Naive thymus-derived CD4-positive, alpha-beta T cell (primary cell): ENCODE measurements at regions of chr13 and their contacts with region 1.

Region 1: GRCh38 chr13:48412881-48413351 is at the start of gene LPAR6:
- DNase-seq: peak in 7 of 9 donors; percentile 30 to 55 (median 47)
- ATAC-seq: peak; percentile 67
- H3K4me3 ChIP-seq: peak within 1 kb of the TSS; percentile 73
- H3K4me3 Mint-ChIP-seq: peak within 1 kb of the TSS; percentile 86 to 100 (median 98)
- H3K27ac ChIP-seq: peak within 1 kb of the TSS; percentile 90
- H3K27ac Mint-ChIP-seq: peak within 1 kb of the TSS; percentile 92 to 100 (median 94)
- H3K4me1 ChIP-seq: peaks cover 9 to 19% of the 10 kb centered on the region in 2 donors
- H3K4me1 Mint-ChIP-seq: peaks cover 19 to 47% (median 40%) of the 10 kb centered on the region in 7 donors
- H3K27me3 ChIP-seq: no peaks in the 10 kb centered on the region
- H3K27me3 Mint-ChIP-seq: no peaks in the 10 kb centered on the region
- total RNA-seq, gene LPAR6: 24.1 to 60.4 (median 32.8) TPM

Region 2: DNA sequence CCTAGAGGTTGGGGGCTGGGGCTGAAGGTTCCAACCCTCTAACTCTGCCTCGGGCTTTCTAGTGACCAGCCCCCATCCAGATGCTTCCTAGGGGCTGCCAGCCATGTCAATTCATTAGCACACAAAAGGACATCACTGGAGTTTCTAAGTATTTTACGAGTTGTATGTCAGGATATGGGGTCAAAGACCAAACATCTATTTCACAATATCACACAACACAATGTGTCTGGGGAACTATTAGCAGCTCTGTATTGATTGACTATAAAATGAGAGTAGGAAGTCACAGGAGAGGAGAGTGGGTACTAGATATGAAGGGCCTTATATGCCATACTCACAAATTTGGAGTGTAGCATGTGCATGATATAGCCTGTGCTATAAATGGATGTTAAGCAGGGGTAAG is 42.1 kb before region 1 on chr13:
- CTCF ChIA-PET with region 1: no interaction called
- POLR2A ChIA-PET with region 1: no interaction called
- intact Hi-C with region 1: no loop called
- DNase-seq: no peak
- ATAC-seq: no peak
- H3K4me3 ChIP-seq: no peak overlapping the region
- H3K4me3 Mint-ChIP-seq: no peak overlapping the region
- H3K27ac ChIP-seq: no peak overlapping the region
- H3K27ac Mint-ChIP-seq: no peak overlapping the region
- H3K4me1 ChIP-seq: no peaks in the 10 kb centered on the region
- H3K4me1 Mint-ChIP-seq: peaks cover 0 to 5% (median 0%) of the 10 kb centered on the region in 7 donors
- H3K27me3 ChIP-seq: no peaks in the 10 kb centered on the region
- H3K27me3 Mint-ChIP-seq: no peaks in the 10 kb centered on the region

Region 3: DNA sequence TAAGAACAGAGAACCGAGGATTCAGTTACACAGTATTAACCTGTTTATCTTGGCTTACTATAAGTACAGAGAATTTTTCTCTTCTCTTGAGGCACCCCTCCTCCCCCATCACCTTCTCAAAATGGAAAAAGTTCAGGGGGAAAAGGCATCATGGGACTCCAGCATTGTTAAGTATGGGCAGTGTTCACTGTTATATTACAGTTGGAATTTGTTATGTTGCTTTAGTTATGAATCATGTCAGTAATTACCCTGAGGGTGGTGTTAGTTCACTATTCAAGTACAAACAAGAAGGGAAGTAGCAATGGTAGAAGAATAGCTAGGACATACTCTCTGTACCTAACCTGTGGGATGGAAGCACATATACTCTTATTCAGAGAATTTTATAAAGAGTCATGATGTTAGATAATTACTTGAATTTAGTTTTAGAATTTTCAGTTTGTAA is 12.0 kb before region 1 on chr13:
- CTCF ChIA-PET with region 1: interaction called, 4 read pairs
- POLR2A ChIA-PET with region 1: interaction called, 7 read pairs
- intact Hi-C with region 1: loop called (anchors 1 kb)
- DNase-seq: peak in 2 of 9 donors; percentile 36 to 42
- ATAC-seq: peak; percentile 74
- H3K4me3 ChIP-seq: no peak overlapping the region
- H3K4me3 Mint-ChIP-seq: peak overlapping the region; percentile 1 to 83 (median 54)
- H3K27ac ChIP-seq: peak overlapping the region; percentile 49
- H3K27ac Mint-ChIP-seq: peak overlapping the region; percentile 1 to 90 (median 50)
- H3K4me1 ChIP-seq: peaks cover 33 to 40% of the 10 kb centered on the region in 2 donors
- H3K4me1 Mint-ChIP-seq: peaks cover 23 to 78% (median 63%) of the 10 kb centered on the region in 7 donors
- H3K27me3 ChIP-seq: no peaks in the 10 kb centered on the region
- H3K27me3 Mint-ChIP-seq: no peaks in the 10 kb centered on the region

Region 4: DNA sequence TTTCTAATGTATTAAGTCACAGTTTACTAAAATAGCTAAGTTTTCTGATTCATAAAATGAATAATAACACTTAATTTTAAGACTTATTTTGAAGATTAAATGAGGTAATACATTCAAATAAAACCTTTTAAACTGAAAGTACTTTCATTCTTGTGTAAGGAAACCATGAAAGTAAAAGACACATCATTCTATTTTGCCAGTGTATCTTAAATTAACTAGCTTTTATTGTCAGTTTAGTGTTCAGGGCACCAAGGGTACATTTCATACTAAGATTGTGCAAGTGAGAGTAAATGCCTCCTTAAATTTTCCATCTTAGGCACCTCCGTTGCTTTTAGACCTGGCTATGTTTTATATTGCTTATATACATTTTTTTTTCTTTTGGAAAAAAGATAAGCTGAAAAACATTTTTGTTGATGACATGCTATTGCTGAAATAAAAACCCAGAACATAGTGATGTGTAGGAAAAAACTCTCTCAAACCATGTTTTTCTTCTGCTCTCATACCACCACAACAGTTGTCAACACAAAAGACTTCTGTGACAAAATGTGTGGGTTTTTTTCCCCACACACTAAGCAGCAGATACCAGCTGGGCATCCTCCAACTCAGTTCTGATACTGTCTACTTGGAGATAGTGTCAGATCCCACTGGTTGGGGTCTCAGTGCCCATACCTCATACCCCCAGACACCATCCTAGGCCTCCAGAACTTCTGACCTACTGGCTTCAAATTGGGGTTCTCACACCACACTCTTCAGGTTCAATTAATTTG is 30.7 kb after region 1 on chr13:
- CTCF ChIA-PET with region 1: no interaction called
- POLR2A ChIA-PET with region 1: interaction called, 3 read pairs
- intact Hi-C with region 1: loop called (anchors 2 to 5 kb)
- DNase-seq: peak in 3 of 9 donors; percentile 8 to 16 (median 9)
- ATAC-seq: no peak
- H3K4me3 ChIP-seq: no peak overlapping the region
- H3K4me3 Mint-ChIP-seq: peak overlapping the region; percentile 22 to 78 (median 65)
- H3K27ac ChIP-seq: no peak overlapping the region
- H3K27ac Mint-ChIP-seq: peak overlapping the region in 6 of 9 donors; percentile 32 to 92 (median 76)
- H3K4me1 ChIP-seq: peaks cover 0 to 11% of the 10 kb centered on the region in 2 donors
- H3K4me1 Mint-ChIP-seq: peaks cover 12 to 25% (median 22%) of the 10 kb centered on the region in 7 donors
- H3K27me3 ChIP-seq: no peaks in the 10 kb centered on the region
- H3K27me3 Mint-ChIP-seq: no peaks in the 10 kb centered on the region

Region 5: DNA sequence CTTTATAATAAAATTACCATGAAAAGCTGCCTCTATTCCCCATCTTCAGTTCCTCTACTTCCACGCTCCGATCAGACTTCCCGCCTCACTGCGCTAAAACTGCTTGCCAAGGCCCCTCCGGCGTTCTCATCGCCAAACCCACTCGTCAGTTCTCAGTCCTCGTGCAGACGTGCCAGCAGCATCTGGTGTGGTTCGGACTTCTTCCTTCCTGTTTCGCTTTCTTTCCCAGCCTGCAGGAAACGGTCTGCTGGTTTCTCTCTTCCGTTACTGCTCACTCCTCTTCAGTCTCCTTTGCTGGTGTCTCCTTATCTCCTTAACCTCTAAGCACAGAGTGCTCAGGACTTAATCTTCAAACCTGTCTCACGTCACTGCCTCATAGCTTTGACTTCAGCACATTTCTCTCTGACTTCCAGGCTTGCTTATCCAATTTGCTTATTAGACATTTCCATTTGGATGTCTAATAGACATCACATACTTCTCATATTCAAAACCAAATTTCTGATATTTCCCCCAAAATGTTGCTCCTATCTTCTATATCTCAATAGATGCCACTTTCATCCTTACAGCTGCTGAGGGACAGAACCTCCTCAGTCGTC is 79.7 kb after region 1 on chr13:
- CTCF ChIA-PET with region 1: no interaction called
- POLR2A ChIA-PET with region 1: interaction called, 6 read pairs
- intact Hi-C with region 1: loop called (anchors 1 kb)
- DNase-seq: peak; percentile 38 to 79 (median 74)
- ATAC-seq: peak; percentile 91
- H3K4me3 ChIP-seq: peak overlapping the region; percentile 73
- H3K4me3 Mint-ChIP-seq: no peak overlapping the region
- H3K27ac ChIP-seq: peak overlapping the region; percentile 74
- H3K27ac Mint-ChIP-seq: no peak overlapping the region
- H3K4me1 ChIP-seq: peaks cover 67% of the 10 kb centered on the region in 2 donors
- H3K4me1 Mint-ChIP-seq: peaks cover 1 to 55% (median 34%) of the 10 kb centered on the region in 7 donors
- H3K27me3 ChIP-seq: no peaks in the 10 kb centered on the region
- H3K27me3 Mint-ChIP-seq: no peaks in the 10 kb centered on the region

Region 6: DNA sequence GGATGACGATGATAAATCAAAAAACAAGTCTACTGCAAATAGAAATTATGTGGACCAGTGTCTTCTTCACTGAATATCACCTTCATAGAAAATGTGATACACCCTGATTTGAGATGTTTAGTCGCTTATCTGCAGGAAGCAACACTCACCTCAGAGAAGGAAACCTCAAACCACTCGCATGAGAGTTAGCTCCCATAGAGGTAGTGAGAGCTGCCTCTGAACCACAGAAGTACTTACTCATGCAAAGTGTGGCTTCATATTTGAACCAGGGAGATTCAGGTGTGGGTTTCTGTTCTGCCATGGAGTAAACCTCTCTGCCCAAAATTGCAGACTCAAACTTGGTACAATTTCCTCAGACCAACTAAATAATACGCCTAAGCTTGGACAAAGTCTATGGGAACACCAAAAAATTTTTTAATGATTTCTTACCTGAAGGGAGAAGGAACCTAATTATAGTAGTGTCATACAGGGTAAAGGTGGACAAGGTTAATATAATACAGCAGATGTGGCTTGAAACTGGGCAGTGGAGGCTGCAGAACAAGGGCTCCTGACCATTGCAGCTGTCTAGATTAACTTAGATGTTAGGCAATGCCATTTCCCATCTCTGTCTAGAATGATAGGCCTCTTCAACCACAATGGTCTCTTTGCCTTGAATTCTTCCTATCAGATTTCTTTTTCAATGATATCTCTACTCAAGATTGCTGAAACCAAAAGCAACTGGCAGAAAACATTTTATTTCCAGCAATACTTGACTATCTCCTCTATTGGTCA is 149.6 kb after region 1 on chr13:
- CTCF ChIA-PET with region 1: no interaction called
- POLR2A ChIA-PET with region 1: no interaction called
- intact Hi-C with region 1: loop called (anchors 1 to 2 kb)
- DNase-seq: peak in 8 of 9 donors; percentile 67 to 87 (median 79)
- ATAC-seq: peak; percentile 100
- H3K4me3 ChIP-seq: peak overlapping the region; percentile 12
- H3K4me3 Mint-ChIP-seq: peak overlapping the region in 9 of 10 donors; percentile 0 to 68 (median 54)
- H3K27ac ChIP-seq: no peak overlapping the region
- H3K27ac Mint-ChIP-seq: peak overlapping the region in 2 of 9 donors; percentile 71 to 82
- H3K4me1 ChIP-seq: peaks cover 22 to 31% of the 10 kb centered on the region in 2 donors
- H3K4me1 Mint-ChIP-seq: peaks cover 28 to 51% (median 36%) of the 10 kb centered on the region in 7 donors
- H3K27me3 ChIP-seq: no peaks in the 10 kb centered on the region
- H3K27me3 Mint-ChIP-seq: peaks cover 7 to 67% (median 13%) of the 10 kb centered on the region in 5 donors

Region 7: GRCh38 chr13:48626077-48626449 is 213.1 kb after region 1 on chr13:
- CTCF ChIA-PET with region 1: no interaction called
- POLR2A ChIA-PET with region 1: no interaction called
- intact Hi-C with region 1: no loop called
- DNase-seq: no peak
- ATAC-seq: no peak
- H3K4me3 ChIP-seq: no peak overlapping the region
- H3K4me3 Mint-ChIP-seq: no peak overlapping the region
- H3K27ac ChIP-seq: no peak overlapping the region
- H3K27ac Mint-ChIP-seq: no peak overlapping the region
- H3K4me1 ChIP-seq: no peaks in the 10 kb centered on the region
- H3K4me1 Mint-ChIP-seq: peaks cover 0 to 1% (median 0%) of the 10 kb centered on the region in 7 donors
- H3K27me3 ChIP-seq: no peaks in the 10 kb centered on the region
- H3K27me3 Mint-ChIP-seq: no peaks in the 10 kb centered on the region